ENCODE measurements at regions of chr3 and their contacts with region 1.

Region 1: GRCh38 chr3:69806735-69807438 is 67.6 kb downstream of the MITF start:
- DNase-seq: peak; percentile 91
- H3K4me3 ChIP-seq: no peak overlapping the region
- H3K27ac ChIP-seq: peak overlapping the region; percentile 91
- H3K4me1 ChIP-seq: peaks cover 38% of the 10 kb centered on the region
- H3K27me3 ChIP-seq: no peaks in the 10 kb centered on the region
- CTCF ChIP-seq: no peak
- POLR2A ChIP-seq: no peak

Region 2: GRCh38 chr3:69770219-69770618 is 36.7 kb before region 1 on chr3:
- CTCF ChIA-PET with region 1: interaction called, 5 read pairs
- POLR2A ChIA-PET with region 1: no interaction called
- dilution Hi-C with region 1: no loop called
- intact Hi-C with region 1: loop called (anchors 2 kb)
- DNase-seq: peak; percentile 77
- H3K4me3 ChIP-seq: no peak overlapping the region
- H3K27ac ChIP-seq: peak overlapping the region; percentile 66
- H3K4me1 ChIP-seq: peaks cover 22% of the 10 kb centered on the region
- H3K27me3 ChIP-seq: no peaks in the 10 kb centered on the region
- CTCF ChIP-seq: no peak
- POLR2A ChIP-seq: no peak

Measured in endothelial cell of umbilical vein (primary cell).